Posterior vena cava (tissue), 2 donors: ENCODE measurements at regions of chr18 and their contacts with region 1.

Region 1: DNA sequence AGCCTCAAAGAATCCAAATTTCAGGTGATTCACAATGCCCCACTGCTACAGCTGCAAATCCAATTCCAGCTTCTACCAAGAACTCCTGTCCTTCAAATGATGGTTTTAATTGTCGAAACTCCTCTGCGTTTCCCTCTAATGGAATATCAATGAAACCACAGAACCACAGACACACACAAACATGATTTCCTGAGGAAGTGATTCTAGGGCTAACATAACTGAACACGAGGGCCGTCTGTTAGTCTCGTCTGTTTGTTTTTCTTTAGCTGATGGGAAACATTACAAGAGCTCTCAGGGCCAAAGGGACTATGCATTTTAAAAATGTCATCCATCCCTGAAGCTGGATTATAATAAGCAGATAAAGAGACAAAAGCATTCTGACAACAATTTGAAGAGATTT is 59.4 kb downstream of the RNF152 start:
- DNase-seq: no peak

Region 2: GRCh38 chr18:61820882-61821281 is 12.5 kb before region 1 on chr18:
- intact Hi-C with region 1: loop called in 1 of 2 experiments (anchors 1 kb)
- DNase-seq: no peak

Region 3: DNA sequence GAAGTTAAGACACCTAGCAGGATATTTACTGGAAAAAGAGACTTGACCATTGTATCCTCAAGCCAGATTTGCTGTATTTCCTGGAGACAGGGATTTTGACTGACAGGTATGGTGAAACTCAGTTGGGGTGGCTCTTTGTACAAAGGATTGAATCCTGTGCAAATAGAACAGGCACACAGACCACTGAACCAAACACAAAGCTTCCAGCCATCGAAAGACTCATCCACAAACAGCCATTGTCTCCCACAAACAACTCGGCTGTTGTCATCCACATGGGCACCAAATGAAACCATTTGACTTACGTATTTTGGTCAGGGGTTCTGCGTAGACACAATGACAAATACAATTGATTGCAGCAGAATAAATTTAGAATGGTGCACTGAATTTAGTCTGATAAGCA is 43.5 kb after region 1 on chr18:
- intact Hi-C with region 1: no loop called
- DNase-seq: no peak